ENCODE measurements at regions of chr6 and their contacts with region 1.

Region 1: DNA sequence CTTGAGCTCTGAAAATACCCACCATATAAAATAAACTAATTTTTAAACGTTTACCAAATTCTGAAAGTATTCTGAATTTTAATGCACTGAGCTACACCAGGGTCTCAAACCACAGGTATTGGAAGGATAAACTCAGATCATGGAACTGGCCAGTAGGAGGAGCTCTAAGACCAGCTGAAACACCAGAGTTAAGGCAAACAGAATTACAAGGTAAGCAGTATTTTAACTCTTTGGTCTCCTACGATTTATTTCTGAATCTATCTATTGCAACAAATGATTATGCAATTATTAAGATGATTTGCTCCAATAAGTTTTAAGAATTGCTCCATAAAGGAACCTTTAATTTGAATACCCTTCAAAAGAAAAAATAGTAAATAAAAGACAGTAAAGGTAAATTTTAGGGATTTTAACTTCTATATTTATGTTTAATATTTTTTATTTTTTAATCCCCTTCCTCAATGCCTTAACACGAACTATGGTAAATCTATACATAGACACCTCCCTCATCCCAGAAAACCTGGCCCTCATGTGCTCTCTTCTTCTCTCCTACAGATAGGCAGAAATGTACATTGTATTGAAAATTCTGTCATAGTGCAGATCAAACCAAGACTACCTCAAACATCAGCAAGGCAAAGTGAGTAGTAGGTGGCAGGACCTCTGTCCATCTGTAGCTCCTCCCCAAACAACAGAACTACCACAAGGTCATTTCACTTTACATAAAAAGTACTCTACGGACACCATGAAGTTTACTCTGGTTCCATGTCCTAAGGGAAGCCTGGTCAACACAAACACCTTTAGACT is 58.4 kb downstream of the SMLR1 start:
- DNase-seq: peak; percentile 80
- ATAC-seq: peak; percentile 76
- H3K4me3 Mint-ChIP-seq: no peak overlapping the region
- H3K27ac Mint-ChIP-seq: no peak overlapping the region
- H3K4me1 Mint-ChIP-seq: no peaks in the 10 kb centered on the region
- H3K27me3 Mint-ChIP-seq: no peaks in the 10 kb centered on the region

Region 2: DNA sequence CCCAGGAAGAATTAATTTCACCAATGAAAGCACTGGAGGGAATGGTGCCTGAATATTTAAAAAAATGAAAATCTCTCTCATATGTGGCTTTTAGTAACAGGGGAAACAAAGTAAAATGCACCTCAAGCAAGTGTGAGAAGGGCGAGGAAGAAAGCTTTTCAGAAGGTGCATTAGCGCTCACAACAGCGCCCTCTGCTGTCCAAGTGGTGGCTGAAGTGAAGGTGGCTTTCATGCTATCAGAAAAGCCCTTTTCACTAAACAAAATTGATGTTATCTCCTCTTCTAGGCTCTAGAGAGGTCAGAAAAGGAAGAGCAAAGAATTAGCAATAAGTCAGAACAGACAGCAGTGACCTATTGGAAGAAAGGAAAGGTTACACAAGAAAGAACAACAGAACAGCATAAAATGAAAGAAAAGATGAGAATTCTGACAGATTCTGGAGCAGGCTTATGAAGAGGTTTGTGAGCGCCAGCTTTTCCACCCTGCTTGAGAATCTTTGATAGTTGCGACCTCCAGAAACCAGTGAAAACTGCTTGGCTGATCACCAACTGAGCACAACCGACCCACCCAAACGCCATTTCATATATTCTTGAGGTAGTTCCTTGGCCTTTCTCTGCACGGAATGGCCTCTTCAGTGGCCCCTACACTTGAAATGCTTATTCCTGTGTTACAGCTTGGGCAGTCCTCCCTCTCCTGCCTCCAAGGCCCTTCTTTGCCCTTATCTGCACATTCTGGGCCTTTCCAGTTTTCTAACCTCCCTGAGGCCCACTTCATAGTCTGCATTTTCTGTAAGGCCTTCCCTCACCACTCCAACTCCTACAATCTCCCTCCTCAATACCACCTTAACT is 13.1 kb before region 1 on chr6:
- CTCF ChIA-PET with region 1: interaction called, 18 read pairs
- POLR2A ChIA-PET with region 1: no interaction called
- intact Hi-C with region 1: no loop called
- DNase-seq: peak; percentile 85
- ATAC-seq: peak; percentile 42
- H3K4me3 Mint-ChIP-seq: no peak overlapping the region
- H3K27ac Mint-ChIP-seq: no peak overlapping the region
- H3K4me1 Mint-ChIP-seq: peaks cover 2% of the 10 kb centered on the region
- H3K27me3 Mint-ChIP-seq: no peaks in the 10 kb centered on the region

Region 3: GRCh38 chr6:130900913-130901312 is 15.3 kb after region 1 on chr6:
- CTCF ChIA-PET with region 1: interaction called, 19 read pairs
- POLR2A ChIA-PET with region 1: no interaction called
- intact Hi-C with region 1: no loop called
- DNase-seq: no peak
- ATAC-seq: no peak
- H3K4me3 Mint-ChIP-seq: no peak overlapping the region
- H3K27ac Mint-ChIP-seq: no peak overlapping the region
- H3K4me1 Mint-ChIP-seq: no peaks in the 10 kb centered on the region
- H3K27me3 Mint-ChIP-seq: no peaks in the 10 kb centered on the region

Region 4: GRCh38 chr6:131116749-131117360 is 231.3 kb after region 1 on chr6:
- CTCF ChIA-PET with region 1: interaction called, 79 read pairs
- POLR2A ChIA-PET with region 1: no interaction called
- intact Hi-C with region 1: loop called (anchors 1 kb)
- DNase-seq: no peak
- ATAC-seq: no peak
- H3K4me3 Mint-ChIP-seq: no peak overlapping the region
- H3K27ac Mint-ChIP-seq: no peak overlapping the region
- H3K4me1 Mint-ChIP-seq: no peaks in the 10 kb centered on the region
- H3K27me3 Mint-ChIP-seq: no peaks in the 10 kb centered on the region

Region 5: DNA sequence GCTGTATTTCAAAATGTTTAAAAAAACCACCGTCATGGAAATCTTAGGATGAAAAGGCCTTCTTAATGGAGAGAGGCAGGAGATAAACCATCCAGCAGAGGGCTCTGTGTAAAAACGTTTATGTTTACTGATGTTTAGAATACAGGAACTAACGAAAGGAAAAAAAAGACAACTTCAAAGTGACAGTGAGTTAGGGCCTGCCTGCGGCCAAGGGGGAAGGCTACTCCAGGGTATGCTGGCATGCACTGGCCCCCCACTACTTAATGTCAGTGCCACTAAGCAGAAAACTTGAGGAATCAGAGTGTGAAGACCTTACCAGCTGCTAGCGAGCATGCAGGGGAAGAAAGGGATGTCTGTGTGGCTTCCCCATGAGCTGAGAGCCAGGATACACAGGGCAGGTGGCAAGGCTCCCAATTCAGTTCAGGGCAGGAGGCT is 297.4 kb after region 1 on chr6:
- CTCF ChIA-PET with region 1: interaction called, 4 read pairs
- POLR2A ChIA-PET with region 1: no interaction called
- intact Hi-C with region 1: loop called (anchors 1 to 10 kb)
- DNase-seq: peak; percentile 30
- ATAC-seq: peak; percentile 66
- H3K4me3 Mint-ChIP-seq: peak overlapping the region; percentile 42
- H3K27ac Mint-ChIP-seq: peak overlapping the region; percentile 87
- H3K4me1 Mint-ChIP-seq: peaks cover 10% of the 10 kb centered on the region
- H3K27me3 Mint-ChIP-seq: no peaks in the 10 kb centered on the region

Measured in activated CD4-positive, alpha-beta T cell treated with anti-CD3 and anti-CD28 coated beads for 36 hours (primary cell).